ENCODE measurements at regions of chr19 and their contacts with region 1.

Region 1: DNA sequence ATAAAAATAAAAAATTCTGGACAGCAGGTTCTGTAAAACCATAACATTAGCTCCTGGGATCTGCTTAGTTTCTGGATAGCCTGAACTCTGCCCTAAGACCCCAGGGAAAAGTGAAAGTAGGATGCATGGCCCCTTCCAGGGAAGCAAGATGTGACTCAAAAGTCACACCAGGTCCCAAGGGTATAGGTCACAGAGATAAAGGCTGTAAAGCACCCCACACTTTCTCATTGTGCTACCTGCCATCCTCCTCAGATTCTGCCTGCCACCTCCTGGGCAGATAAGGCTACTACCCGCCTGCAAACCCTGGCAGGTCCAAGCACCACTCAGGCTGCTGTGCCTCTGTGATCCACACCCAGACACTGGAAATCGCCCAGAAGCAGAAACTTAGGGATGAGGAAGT is 20.6 kb downstream of the FFAR2 start:
- H3K4me3 Mint-ChIP-seq: no peak overlapping the region
- H3K27ac Mint-ChIP-seq: no peak overlapping the region
- H3K4me1 Mint-ChIP-seq: peaks cover 17% of the 10 kb centered on the region
- H3K27me3 Mint-ChIP-seq: peaks cover 20% of the 10 kb centered on the region

Region 2: DNA sequence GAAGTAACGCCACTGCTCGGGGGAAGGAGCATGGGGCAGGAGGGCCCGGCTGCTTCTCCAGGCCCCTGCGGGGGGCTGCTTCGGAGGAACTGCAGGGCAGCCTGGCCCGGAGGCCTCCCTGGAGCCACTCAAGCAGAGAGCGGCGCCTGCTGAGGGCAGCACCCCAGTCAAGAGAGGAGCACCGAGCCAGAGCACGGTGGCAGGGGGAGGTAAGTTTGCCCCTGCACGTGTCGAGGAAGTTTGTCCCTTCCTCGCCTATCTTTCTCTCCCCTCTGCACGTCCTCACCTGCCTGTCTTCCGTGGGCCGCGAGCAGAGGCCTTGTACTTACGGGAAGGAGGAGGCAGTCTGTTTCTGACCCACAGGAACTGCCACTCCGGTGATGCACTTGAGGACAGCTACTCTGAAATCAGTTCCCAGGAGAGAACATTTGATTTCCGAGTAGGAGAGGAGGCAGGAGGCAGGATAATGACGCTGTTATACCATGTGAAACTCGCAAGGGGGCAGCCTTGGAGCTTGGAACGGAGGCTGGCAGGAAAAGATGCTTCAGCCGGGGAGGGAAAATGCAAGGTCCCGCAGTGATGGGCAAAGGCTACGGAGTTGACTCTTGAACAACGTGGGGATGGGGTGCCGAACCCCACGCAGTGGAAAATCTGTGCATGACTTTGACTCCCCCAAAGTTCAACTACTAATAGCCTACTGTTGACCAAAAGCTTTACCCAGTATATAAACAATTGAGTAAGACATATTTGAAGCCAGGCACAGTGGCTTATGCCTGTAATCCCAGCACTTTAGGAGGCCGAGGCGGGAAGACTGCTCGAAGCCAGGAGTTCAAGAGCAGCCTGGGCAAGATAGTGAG is 116.0 kb before region 1 on chr19:
- intact Hi-C with region 1: loop called (anchors 2 kb)
- H3K4me3 Mint-ChIP-seq: no peak overlapping the region
- H3K27ac Mint-ChIP-seq: no peak overlapping the region
- H3K4me1 Mint-ChIP-seq: peaks cover 51% of the 10 kb centered on the region
- H3K27me3 Mint-ChIP-seq: peaks cover 33% of the 10 kb centered on the region